Activated CD4-positive, alpha-beta T cell treated with anti-CD3 and anti-CD28 coated beads for 36 hours (primary cell): ENCODE measurements at regions of chr1 and their contacts with region 1.

Region 1: DNA sequence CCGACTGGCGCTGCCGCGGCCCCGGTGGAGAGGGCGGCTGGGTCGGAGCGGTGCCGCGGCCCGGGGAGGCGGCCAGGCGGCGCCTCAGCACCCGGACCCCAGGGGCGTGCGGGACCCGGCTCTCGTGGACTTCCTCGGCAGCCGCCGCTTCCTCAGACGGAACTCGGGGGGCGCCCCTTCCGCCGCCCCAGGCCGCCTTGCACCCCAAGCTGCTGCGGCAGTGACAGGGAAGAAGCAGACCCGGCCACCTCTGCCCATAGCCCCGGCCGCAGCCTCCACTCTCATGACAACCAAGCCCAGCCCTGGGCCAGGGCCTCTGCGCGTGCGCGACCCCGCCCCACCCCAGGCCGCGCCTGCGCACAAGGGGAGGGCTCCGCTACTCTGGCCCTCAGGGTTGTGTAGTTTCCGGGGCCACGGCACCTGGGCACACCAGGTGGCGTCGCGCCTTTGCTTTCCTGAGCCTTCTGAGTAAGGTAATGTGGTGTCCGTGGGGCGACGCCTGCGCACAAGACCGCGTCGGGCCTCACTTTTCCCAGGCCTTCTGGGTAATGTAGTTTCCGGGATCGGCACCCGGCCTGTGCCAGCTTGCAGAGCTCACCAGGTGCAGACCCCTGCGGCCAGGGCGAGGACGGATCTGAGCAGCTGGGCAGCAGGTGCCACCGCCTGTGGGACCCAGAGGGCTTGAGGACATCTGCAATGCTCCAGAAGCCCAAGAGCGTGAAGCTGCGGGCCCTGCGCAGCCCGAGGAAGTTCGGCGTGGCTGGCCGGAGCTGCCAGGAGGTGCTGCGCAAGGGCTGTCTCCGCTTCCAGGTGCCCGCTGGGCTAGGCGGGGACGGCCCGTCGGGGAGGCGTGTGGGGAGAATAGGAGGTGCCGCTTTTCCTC is at the starts of genes CEP104 and DFFB:
- DNase-seq: peak; percentile 97
- ATAC-seq: peak; percentile 99
- H3K4me3 Mint-ChIP-seq: peak within 1 kb of the TSS; percentile 95
- H3K27ac Mint-ChIP-seq: peak within 1 kb of the TSS; percentile 90
- H3K4me1 Mint-ChIP-seq: peaks cover 31% of the 10 kb centered on the region
- H3K27me3 Mint-ChIP-seq: no peaks in the 10 kb centered on the region
- total RNA-seq, gene CEP104: 33.6 to 35.5 TPM
- total RNA-seq, gene DFFB: 7.2 to 8.4 TPM

Region 2: DNA sequence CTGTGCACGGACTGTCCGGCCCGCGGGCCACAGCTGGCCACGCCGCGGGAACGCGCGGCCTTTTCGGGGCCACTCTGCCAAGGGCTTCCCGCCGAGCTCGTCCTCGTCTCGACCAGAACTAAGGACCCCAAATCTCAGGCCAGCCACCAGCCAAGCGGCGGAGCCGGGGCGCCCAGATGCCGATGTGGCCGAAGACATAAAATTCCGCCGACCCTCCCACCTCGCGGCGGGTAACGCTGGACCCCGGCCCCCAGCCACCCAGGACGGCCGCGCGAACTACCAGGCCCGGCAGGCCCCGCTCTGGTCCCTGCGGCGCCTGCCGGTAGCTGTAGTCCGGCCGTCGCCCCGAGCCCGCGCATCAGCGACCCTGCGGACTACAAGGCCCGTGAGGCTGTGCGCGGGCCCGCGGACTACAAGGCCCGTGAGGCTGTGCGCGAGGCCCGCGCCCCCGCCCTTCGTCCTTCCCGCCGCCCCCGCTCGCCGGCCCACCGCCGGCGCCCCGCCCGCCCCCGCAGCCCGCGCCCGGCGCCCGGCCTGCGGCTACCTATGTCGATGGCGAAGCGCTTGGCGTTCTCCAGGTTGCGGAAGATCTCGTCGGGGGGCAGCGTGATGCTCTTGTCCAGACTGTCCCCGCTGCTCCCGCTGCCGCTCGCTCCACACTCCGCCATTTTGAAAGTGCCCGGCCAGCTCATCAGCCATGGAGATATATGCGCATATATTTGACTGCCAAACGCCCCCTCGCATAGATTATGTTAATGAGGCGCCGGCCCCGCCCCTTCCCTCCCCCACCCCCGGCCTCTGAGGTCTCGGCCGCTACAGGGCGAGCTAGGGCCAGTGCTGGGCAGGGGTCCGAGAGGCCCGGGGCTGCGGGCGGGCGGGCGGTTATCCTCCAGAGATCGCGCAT is 1331.0 kb before region 1 on chr1 and contains the start of gene PANK4:
- CTCF ChIA-PET with region 1: no interaction called
- POLR2A ChIA-PET with region 1: no interaction called
- intact Hi-C with region 1: loop called in 1 of 2 experiments (anchors 10 kb)
- DNase-seq: peak; percentile 96
- ATAC-seq: peak; percentile 87
- H3K4me3 Mint-ChIP-seq: peak within 1 kb of the TSS; percentile 77
- H3K27ac Mint-ChIP-seq: peak within 1 kb of the TSS; percentile 91
- H3K4me1 Mint-ChIP-seq: peaks cover 43% of the 10 kb centered on the region
- H3K27me3 Mint-ChIP-seq: peaks cover 3% of the 10 kb centered on the region
- total RNA-seq, gene PANK4: 32.4 to 39.2 TPM

Region 3: GRCh38 chr1:3746830-3747521 is 110.2 kb before region 1 on chr1:
- CTCF ChIA-PET with region 1: no interaction called
- POLR2A ChIA-PET with region 1: no interaction called
- intact Hi-C with region 1: loop called in 1 of 2 experiments (anchors 1 kb)
- DNase-seq: peak; percentile 95
- ATAC-seq: peak; percentile 99
- H3K4me3 Mint-ChIP-seq: peak overlapping the region; percentile 77
- H3K27ac Mint-ChIP-seq: peak overlapping the region; percentile 51
- H3K4me1 Mint-ChIP-seq: peaks cover 32% of the 10 kb centered on the region
- H3K27me3 Mint-ChIP-seq: no peaks in the 10 kb centered on the region

Region 4: GRCh38 chr1:3772027-3772714 is 85.0 kb before region 1 on chr1:
- CTCF ChIA-PET with region 1: no interaction called
- POLR2A ChIA-PET with region 1: no interaction called
- intact Hi-C with region 1: loop called (anchors 1 kb)
- DNase-seq: peak; percentile 94
- ATAC-seq: peak; percentile 81
- H3K4me3 Mint-ChIP-seq: peak overlapping the region; percentile 70
- H3K27ac Mint-ChIP-seq: peak overlapping the region; percentile 78
- H3K4me1 Mint-ChIP-seq: peaks cover 10% of the 10 kb centered on the region
- H3K27me3 Mint-ChIP-seq: no peaks in the 10 kb centered on the region

Region 5: GRCh38 chr1:3796215-3797061 is 60.7 kb before region 1 on chr1 and contains the start of gene LRRC47:
- CTCF ChIA-PET with region 1: interaction called, 4 read pairs
- POLR2A ChIA-PET with region 1: interaction called, 4 read pairs
- intact Hi-C with region 1: loop called (anchors 1 kb)
- DNase-seq: peak; percentile 97
- ATAC-seq: peak; percentile 99
- H3K4me3 Mint-ChIP-seq: peak within 1 kb of the TSS; percentile 81
- H3K27ac Mint-ChIP-seq: peak within 1 kb of the TSS; percentile 87
- H3K4me1 Mint-ChIP-seq: peaks cover 44% of the 10 kb centered on the region
- H3K27me3 Mint-ChIP-seq: peaks cover 6% of the 10 kb centered on the region
- total RNA-seq, gene LRRC47: 34.8 to 38.7 TPM

Region 6: DNA sequence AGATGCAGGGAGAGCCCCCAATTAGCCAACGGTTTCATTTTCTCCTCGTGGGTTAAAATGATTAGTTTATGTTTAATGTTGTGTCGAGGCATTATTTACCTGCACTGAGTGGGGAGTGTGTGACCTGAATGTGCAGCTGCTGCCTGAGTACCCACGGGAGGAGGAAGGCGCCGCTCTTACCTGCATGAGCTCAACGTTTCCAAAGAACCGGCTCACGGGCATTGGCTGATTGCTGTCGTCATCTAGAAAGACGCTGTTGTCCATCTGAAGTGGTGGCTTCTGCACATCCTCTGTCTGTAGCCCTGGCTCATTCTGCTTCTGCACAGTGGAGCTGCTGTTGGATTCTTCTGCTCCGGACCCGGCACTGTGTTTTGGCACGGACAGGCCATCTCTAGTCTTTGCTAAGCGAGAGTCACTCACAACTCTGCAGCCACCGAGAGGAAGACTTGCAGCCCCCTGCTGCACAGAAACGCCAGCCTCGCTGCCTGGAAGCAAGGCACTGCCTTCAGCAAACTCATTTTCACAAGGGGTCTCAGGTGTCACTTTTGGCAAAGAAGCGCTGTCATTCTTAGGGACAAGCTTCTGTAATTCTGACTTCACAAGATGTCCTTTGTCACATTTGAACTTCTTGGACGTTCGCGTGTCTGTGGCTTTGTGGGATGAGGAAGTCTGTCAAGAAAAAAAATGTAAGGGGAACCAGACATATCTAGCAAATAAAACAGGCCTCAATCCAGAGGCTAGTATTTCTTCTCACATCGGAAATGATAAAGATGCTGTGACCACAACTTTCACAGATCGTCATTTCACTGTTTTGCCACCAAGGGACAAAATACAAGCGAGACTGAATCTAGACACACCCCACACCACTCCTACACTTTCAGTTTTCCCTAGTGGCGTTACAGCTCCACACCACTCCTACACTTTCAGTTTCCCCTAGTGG is 33.5 kb after region 1 on chr1:
- CTCF ChIA-PET with region 1: no interaction called
- POLR2A ChIA-PET with region 1: no interaction called
- intact Hi-C with region 1: loop called (anchors 2 kb)
- DNase-seq: no peak
- ATAC-seq: peak; percentile 87
- H3K4me3 Mint-ChIP-seq: no peak overlapping the region
- H3K27ac Mint-ChIP-seq: peak overlapping the region; percentile 83
- H3K4me1 Mint-ChIP-seq: peaks cover 30% of the 10 kb centered on the region
- H3K27me3 Mint-ChIP-seq: no peaks in the 10 kb centered on the region

Region 7: DNA sequence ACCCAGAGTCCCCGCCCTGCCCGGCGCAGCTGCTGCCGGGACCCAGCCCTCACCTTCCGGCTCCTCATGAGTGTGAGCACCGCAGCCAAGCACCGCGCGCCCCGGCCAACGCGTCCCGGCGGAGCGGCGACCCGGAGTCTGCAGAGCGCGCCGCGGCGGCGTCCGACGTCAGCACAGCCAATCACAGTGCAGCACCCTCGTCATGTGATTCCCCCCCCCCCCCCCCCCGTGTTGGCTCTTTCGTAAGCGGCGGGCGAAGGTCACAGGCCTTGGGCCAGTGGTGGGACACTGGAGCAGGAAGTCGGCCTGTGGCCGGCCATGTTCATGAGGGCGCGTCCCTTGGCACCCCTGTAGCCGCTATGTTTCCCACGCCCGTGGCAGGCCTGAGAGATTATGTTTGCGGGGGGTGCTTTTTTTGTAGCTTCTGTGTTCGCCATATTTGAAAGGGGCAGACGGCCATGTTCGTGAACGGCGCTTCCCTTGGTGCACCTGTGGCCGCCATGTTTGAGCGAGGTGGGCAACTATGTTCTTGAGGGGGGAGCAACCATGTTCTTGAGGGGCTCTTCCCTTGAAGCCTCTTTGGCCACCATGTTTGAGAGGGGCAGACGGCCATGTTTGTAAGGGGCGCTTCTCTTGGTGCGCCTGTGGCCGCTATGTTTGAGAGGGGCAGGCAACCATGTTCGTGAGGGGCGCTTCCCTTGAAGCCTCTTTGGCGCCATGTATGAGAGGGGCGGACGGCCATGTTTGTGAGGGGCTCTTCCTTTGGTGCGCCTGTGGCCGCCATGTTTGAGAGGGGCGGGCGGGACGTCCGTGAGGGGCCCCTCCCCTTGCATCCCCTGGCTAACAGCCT is 43.2 kb after region 1 on chr1 and contains the start of gene C1orf174:
- CTCF ChIA-PET with region 1: no interaction called
- POLR2A ChIA-PET with region 1: interaction called, 4 read pairs
- intact Hi-C with region 1: loop called (anchors 1 kb)
- DNase-seq: peak; percentile 94
- ATAC-seq: peak; percentile 76
- H3K4me3 Mint-ChIP-seq: peak within 1 kb of the TSS; percentile 87
- H3K27ac Mint-ChIP-seq: peak within 1 kb of the TSS; percentile 98
- H3K4me1 Mint-ChIP-seq: peaks cover 51% of the 10 kb centered on the region
- H3K27me3 Mint-ChIP-seq: no peaks in the 10 kb centered on the region
- total RNA-seq, gene C1orf174: 39.8 to 49.4 TPM